ENCODE measurements at regions of chr7 and their contacts with region 1.

Region 1: DNA sequence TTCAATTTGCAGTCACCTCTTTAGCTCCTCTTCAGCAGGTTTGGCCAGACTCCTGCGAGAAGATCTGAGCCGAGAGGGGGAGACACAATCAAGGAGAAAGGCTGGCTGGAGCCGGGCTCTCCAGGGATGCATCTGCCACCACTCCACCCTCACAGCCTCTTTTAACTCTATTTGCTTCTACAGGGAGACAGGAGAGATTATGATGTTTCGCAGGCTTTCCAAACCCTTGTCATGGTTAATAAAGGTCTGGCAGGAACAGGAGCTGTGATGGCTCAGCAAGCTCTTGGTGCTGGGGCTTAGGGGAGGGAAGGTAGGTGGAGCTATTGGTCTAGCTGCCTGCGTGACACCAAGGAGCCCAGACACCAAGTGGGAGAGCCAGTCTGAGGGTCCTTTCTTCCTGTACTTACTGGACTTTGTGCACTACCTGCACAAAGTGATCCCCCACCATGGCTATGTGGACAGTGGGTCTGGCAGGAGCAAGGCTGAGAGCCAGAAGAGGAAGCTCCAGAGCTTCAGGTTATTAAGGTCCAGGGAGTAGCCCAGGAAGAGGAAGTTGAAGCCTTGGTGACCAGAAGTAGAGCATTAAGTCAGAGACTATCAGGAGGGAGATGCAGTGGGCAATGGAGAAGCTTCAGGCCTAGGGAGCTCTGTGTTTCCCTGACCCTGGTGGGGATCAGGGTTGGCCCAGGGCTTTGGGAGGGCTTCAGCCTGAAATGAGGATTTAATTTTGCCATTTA is 448.3 kb upstream of the PODXL start:
- DNase-seq: no peak

Region 2: GRCh38 chr7:131188367-131189339 is 816.1 kb before region 1 on chr7:
- intact Hi-C with region 1: no loop called
- DNase-seq: no peak

Region 3: DNA sequence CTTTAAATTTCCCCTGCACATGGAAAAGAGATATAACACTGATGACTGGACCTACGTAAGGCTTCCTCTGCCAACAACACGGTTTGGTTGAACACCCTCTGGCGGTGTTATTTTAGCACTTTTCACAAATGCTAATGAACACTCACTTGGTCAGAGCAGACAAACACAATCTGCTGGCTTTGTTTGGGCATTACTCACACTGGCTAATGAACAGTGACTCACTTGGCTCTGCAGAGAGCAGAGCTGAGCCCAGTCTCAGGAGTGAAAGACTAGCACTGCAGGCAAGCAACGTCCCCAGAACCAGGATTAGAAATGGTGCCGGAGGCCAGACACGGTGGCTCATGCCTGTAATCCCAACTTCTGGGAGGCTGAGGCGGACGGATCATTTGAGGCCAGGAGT is 140.8 kb after region 1 on chr7:
- intact Hi-C with region 1: loop called (anchors 10 kb)
- DNase-seq: no peak

Region 4: GRCh38 chr7:132252793-132253100 is 248.0 kb after region 1 on chr7:
- intact Hi-C with region 1: loop called (anchors 1 kb)
- DNase-seq: no peak

Measured in cardiac septum (tissue), 1 donor.